ENCODE measurements at regions of chr1 and their contacts with region 1.

Region 1: DNA sequence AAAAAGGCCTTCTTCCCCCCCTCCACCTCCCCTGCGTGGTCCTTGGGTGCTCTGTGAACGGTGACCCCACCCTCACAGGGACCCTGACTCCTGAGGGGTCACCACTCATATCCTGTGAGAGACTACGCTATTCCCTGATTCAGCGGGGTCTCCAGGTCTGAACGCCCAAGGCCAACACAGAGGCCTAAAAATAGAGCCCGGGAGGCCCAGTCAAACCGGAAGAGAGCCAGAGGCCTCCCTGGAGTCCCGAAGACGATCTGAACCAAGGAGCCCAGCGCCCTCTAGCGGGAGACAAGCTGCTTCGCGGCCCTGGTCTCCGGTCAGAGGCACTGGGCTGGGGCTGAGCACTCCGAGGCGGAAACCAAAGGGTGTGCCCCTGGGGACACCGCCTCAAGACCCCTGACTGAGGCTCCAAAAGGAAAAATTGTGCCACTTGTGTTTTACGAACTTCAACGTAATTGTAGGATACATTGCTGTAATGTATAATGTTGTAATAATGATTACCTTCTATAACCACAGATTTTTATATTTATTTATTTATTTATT is 42.4 kb upstream of the PSEN2 start:
- DNase-seq: peak; percentile 99
- ATAC-seq: peak; percentile 99
- H3K4me3 Mint-ChIP-seq: peak overlapping the region; percentile 44
- H3K27ac Mint-ChIP-seq: peak overlapping the region; percentile 94
- H3K4me1 Mint-ChIP-seq: peaks cover 41% of the 10 kb centered on the region
- H3K27me3 Mint-ChIP-seq: no peaks in the 10 kb centered on the region

Region 2: DNA sequence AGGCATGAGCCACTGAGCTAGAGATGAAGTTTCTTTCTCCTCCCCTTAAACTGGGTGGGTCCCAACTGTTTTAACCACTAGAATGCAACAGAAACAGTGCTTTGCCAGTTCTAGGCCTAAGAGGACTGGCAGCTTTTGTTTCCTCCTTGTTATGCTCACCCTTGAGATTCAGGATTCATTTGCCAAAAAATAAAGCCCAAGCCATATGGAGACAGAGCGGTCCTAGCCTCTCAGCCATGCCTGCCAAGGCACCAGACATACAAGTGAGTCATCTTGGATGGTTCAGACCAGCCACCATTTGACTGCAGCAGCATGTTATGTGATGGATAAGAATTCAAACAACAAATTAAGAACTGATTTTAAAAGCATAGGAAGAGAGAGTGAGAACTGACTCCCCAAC is 317.6 kb before region 1 on chr1:
- CTCF ChIA-PET with region 1: no interaction called
- POLR2A ChIA-PET with region 1: no interaction called
- intact Hi-C with region 1: no loop called
- DNase-seq: no peak
- ATAC-seq: no peak
- H3K4me3 Mint-ChIP-seq: no peak overlapping the region
- H3K27ac Mint-ChIP-seq: no peak overlapping the region
- H3K4me1 Mint-ChIP-seq: no peaks in the 10 kb centered on the region
- H3K27me3 Mint-ChIP-seq: peaks cover 5% of the 10 kb centered on the region

Region 3: GRCh38 chr1:226634166-226634588 is 193.9 kb before region 1 on chr1:
- CTCF ChIA-PET with region 1: interaction called, 43 read pairs
- POLR2A ChIA-PET with region 1: no interaction called
- intact Hi-C with region 1: loop called (anchors 1 kb)
- DNase-seq: peak; percentile 91
- ATAC-seq: peak; percentile 70
- H3K4me3 Mint-ChIP-seq: no peak overlapping the region
- H3K27ac Mint-ChIP-seq: peak overlapping the region; percentile 17
- H3K4me1 Mint-ChIP-seq: peaks cover 49% of the 10 kb centered on the region
- H3K27me3 Mint-ChIP-seq: no peaks in the 10 kb centered on the region

Region 4: GRCh38 chr1:226708342-226708780 is 119.7 kb before region 1 on chr1:
- CTCF ChIA-PET with region 1: no interaction called
- POLR2A ChIA-PET with region 1: interaction called, 6 read pairs
- intact Hi-C with region 1: loop called in 1 of 2 experiments (anchors 1 kb)
- DNase-seq: peak; percentile 63
- ATAC-seq: peak; percentile 75
- H3K4me3 Mint-ChIP-seq: peak overlapping the region; percentile 34
- H3K27ac Mint-ChIP-seq: peak overlapping the region; percentile 100
- H3K4me1 Mint-ChIP-seq: peaks cover 93% of the 10 kb centered on the region
- H3K27me3 Mint-ChIP-seq: no peaks in the 10 kb centered on the region

Region 5: GRCh38 chr1:226754793-226755533 is 73.1 kb before region 1 on chr1:
- CTCF ChIA-PET with region 1: interaction called, 5 read pairs
- POLR2A ChIA-PET with region 1: no interaction called
- intact Hi-C with region 1: loop called in 1 of 2 experiments (anchors 5 kb)
- DNase-seq: no peak
- ATAC-seq: peak; percentile 63
- H3K4me3 Mint-ChIP-seq: peak overlapping the region; percentile 0
- H3K27ac Mint-ChIP-seq: peak overlapping the region; percentile 34
- H3K4me1 Mint-ChIP-seq: peaks cover 30% of the 10 kb centered on the region
- H3K27me3 Mint-ChIP-seq: no peaks in the 10 kb centered on the region

Region 6: GRCh38 chr1:226940029-226940805 is 112.2 kb after region 1 on chr1 and contains the start of gene COQ8A:
- CTCF ChIA-PET with region 1: interaction called, 3 read pairs
- POLR2A ChIA-PET with region 1: no interaction called
- intact Hi-C with region 1: loop called in 1 of 2 experiments (anchors 1 kb)
- DNase-seq: peak; percentile 100
- ATAC-seq: peak; percentile 97
- H3K4me3 Mint-ChIP-seq: peak within 1 kb of the TSS; percentile 82
- H3K27ac Mint-ChIP-seq: peak within 1 kb of the TSS; percentile 96
- H3K4me1 Mint-ChIP-seq: peaks cover 53% of the 10 kb centered on the region
- H3K27me3 Mint-ChIP-seq: no peaks in the 10 kb centered on the region
- total RNA-seq, gene COQ8A: 21.3 to 26.9 TPM

Measured in activated CD4-positive, alpha-beta T cell treated with anti-CD3 and anti-CD28 coated beads for 36 hours (primary cell).